ENCODE measurements at regions of chr3 and their contacts with region 1.

Region 1: DNA sequence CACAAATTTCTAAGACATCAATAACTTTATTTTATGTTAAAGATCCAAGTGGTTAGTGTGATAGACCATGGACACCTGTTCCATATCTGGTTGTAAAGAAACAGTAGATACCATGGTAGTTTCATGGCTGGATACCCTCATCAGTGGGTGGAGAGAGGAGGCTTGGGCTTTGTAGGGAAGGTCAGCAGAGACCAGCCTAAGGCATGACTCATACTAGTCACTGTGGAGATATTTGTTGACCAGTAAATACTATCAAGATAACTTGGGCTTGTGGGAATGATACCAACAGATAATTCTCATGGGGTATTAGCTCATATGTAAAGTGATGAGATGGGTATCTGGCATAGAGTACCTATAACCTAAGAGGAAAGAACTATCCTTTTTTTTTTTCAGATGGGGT is 354.5 kb downstream of the CACNA2D3 start:
- DNase-seq: no peak
- ATAC-seq: no peak
- H3K4me3 ChIP-seq: no peak overlapping the region
- H3K27ac ChIP-seq: no peak overlapping the region
- H3K4me1 ChIP-seq: no peaks in the 10 kb centered on the region
- H3K27me3 ChIP-seq: no peaks in the 10 kb centered on the region
- CTCF ChIP-seq: no peak
- POLR2A ChIP-seq: no peak
- RAD21 ChIP-seq: no peak

Region 2: DNA sequence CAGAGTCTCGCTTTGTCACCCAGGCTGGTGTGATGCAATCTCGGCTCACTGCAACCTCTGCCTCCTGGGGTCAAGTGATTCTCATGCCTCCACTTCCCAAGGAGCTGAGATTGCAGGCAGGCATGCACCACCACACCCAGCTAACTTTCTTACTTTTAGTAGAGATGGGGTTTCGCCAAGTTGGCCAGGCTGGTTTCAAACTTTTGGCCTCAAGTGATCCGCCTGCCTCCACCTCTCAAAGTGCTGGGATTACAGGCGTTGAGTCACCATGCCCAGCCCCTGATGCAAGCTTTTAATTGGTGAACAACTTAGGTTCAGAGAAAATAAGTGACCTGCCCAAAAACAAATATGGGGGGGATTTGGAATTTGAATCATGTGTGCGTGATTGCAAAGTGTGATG is 204.8 kb after region 1 on chr3:
- CTCF ChIA-PET with region 1: no interaction called
- POLR2A ChIA-PET with region 1: no interaction called
- RAD21 ChIA-PET with region 1: no interaction called
- intact Hi-C with region 1: loop called (anchors 10 kb)
- DNase-seq: no peak
- ATAC-seq: no peak
- H3K4me3 ChIP-seq: no peak overlapping the region
- H3K27ac ChIP-seq: no peak overlapping the region
- H3K4me1 ChIP-seq: no peaks in the 10 kb centered on the region
- H3K27me3 ChIP-seq: no peaks in the 10 kb centered on the region
- CTCF ChIP-seq: no peak
- POLR2A ChIP-seq: no peak
- RAD21 ChIP-seq: no peak